Activated CD4-positive, alpha-beta memory T cell treated with anti-CD3 and anti-CD28 coated beads for 36 hours (primary cell): ENCODE measurements at regions of chr1 and their contacts with region 1.

Region 1: GRCh38 chr1:155859234-155859829 is at the start of gene SYT11:
- DNase-seq: peak; percentile 97
- H3K4me3 Mint-ChIP-seq: peak within 1 kb of the TSS; percentile 99
- H3K27ac Mint-ChIP-seq: peak within 1 kb of the TSS; percentile 93
- H3K4me1 Mint-ChIP-seq: peaks cover 45% of the 10 kb centered on the region
- H3K27me3 Mint-ChIP-seq: no peaks in the 10 kb centered on the region
- total RNA-seq, gene SYT11: 25.0 to 25.1 TPM

Region 2: GRCh38 chr1:155277070-155277895 is 582.0 kb before region 1 on chr1 and contains the start of gene HCN3:
- CTCF ChIA-PET with region 1: no interaction called
- POLR2A ChIA-PET with region 1: interaction called, 4 read pairs
- intact Hi-C with region 1: loop called (anchors 10 kb)
- DNase-seq: peak; percentile 96
- H3K4me3 Mint-ChIP-seq: peak within 1 kb of the TSS; percentile 65
- H3K27ac Mint-ChIP-seq: peak within 1 kb of the TSS; percentile 61
- H3K4me1 Mint-ChIP-seq: peaks cover 32% of the 10 kb centered on the region
- H3K27me3 Mint-ChIP-seq: no peaks in the 10 kb centered on the region
- total RNA-seq, gene HCN3: 1.9 to 2.4 TPM

Region 3: GRCh38 chr1:155893389-155894142 is 34.2 kb after region 1 on chr1:
- CTCF ChIA-PET with region 1: interaction called, 3 read pairs
- POLR2A ChIA-PET with region 1: interaction called, 3 read pairs
- intact Hi-C with region 1: loop called (anchors 5 kb)
- DNase-seq: peak; percentile 34
- H3K4me3 Mint-ChIP-seq: no peak overlapping the region
- H3K27ac Mint-ChIP-seq: peak overlapping the region; percentile 59
- H3K4me1 Mint-ChIP-seq: peaks cover 15% of the 10 kb centered on the region
- H3K27me3 Mint-ChIP-seq: no peaks in the 10 kb centered on the region

Region 4: GRCh38 chr1:155978325-155978972 is 119.1 kb after region 1 on chr1 and contains the start of gene ARHGEF2:
- CTCF ChIA-PET with region 1: no interaction called
- POLR2A ChIA-PET with region 1: interaction called, 7 read pairs
- intact Hi-C with region 1: loop called (anchors 2 kb)
- DNase-seq: peak; percentile 88
- H3K4me3 Mint-ChIP-seq: peak within 1 kb of the TSS; percentile 96
- H3K27ac Mint-ChIP-seq: peak within 1 kb of the TSS; percentile 96
- H3K4me1 Mint-ChIP-seq: peaks cover 66% of the 10 kb centered on the region
- H3K27me3 Mint-ChIP-seq: no peaks in the 10 kb centered on the region
- total RNA-seq, gene ARHGEF2: 165 to 174 TPM

Region 5: DNA sequence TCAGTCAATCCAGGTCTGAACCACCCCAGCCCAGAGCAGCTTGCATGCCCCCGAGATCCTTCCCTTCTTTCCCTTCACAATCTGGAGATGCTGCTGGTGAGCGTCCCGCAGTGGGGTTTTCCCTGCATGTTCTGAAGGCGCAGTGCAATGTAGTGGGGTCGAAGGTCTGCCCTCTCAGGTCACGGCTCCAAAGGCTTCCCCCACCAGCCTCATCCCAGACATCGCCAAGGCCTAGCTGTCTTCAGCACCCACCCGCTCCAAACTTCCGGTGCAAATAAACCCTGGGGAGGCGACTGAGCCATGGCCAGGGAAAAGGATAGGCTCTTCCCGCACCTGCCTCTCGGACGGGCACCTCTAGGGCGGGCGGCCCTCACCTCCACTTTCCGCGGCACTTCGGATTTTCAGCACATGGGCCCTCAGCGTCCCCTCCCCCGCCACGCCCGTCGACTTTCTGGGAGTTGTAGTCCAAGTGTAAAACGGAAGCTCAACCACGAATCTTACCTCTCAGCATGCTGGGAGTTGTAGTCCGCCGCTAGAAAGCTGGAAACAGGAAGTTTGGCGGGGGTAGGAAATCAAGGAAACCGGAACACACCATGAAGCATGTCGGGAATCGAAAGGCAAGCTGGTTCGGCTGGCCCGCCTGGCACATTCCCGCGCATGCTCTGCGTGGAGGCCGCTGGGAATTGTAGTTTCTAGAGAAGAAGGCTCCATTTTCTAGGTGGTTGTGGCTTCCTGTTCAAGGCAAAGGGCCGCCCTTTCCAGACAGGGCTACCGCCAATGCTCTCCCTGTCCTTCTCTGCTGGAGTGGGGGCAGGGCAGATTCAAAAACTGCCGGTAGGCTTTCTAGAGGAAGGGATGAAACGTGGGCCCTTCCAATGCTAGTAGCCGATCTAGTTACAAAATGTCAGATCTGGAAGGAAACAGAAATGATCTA is 881.6 kb after region 1 on chr1 and contains the start of gene MRPL24:
- CTCF ChIA-PET with region 1: no interaction called
- POLR2A ChIA-PET with region 1: no interaction called
- intact Hi-C with region 1: loop called (anchors 5 kb)
- DNase-seq: peak; percentile 98
- H3K4me3 Mint-ChIP-seq: peak within 1 kb of the TSS; percentile 89
- H3K27ac Mint-ChIP-seq: peak within 1 kb of the TSS; percentile 95
- H3K4me1 Mint-ChIP-seq: peaks cover 47% of the 10 kb centered on the region
- H3K27me3 Mint-ChIP-seq: no peaks in the 10 kb centered on the region
- total RNA-seq, gene MRPL24: 105 to 106 TPM